Dorsolateral prefrontal cortex (tissue), 120 donors: ENCODE measurements at regions of chr2 and their contacts with region 1.

Region 1: DNA sequence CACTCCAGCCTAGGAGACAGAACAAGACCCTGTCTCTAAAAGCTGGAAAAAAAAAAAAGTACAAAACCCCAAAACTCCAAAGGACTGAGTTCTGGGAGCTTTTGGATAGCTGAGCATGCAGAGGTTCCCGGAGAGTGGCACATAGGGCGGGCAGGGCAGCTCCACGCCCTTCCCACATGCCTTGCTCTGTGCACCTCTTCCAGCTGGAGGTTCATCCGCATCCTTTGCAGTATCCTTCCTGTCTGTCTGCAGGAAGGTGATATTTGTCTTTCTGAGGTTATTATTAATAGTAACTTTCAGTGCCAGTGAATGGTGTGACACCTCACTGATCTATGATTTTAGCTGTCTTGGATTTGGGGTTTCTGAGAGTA is 70.2 kb downstream of the INPP4A start:
- DNase-seq: no peak
- H3K4me3 ChIP-seq: peak overlapping the region in 3 of 59 donors; percentile 2 to 4 (median 4)
- H3K27ac ChIP-seq: peak overlapping the region in 33 of 59 donors; percentile 1 to 76 (median 49)
- H3K27me3 ChIP-seq: no peaks in the 10 kb centered on the region
- CTCF ChIP-seq: no peak

Region 2: GRCh38 chr2:98465456-98466226 is 49.2 kb before region 1 on chr2:
- intact Hi-C with region 1: loop called in 1 of 2 experiments (anchors 5 kb)
- DNase-seq: peak in 2 of 10 donors; percentile 53 to 92
- H3K4me3 ChIP-seq: no peak overlapping the region
- H3K27ac ChIP-seq: peak overlapping the region in 16 of 59 donors; percentile 6 to 76 (median 33)
- H3K27me3 ChIP-seq: no peaks in the 10 kb centered on the region
- CTCF ChIP-seq: no peak